ENCODE measurements at regions of chr1 and their contacts with region 1.

Region 1: DNA sequence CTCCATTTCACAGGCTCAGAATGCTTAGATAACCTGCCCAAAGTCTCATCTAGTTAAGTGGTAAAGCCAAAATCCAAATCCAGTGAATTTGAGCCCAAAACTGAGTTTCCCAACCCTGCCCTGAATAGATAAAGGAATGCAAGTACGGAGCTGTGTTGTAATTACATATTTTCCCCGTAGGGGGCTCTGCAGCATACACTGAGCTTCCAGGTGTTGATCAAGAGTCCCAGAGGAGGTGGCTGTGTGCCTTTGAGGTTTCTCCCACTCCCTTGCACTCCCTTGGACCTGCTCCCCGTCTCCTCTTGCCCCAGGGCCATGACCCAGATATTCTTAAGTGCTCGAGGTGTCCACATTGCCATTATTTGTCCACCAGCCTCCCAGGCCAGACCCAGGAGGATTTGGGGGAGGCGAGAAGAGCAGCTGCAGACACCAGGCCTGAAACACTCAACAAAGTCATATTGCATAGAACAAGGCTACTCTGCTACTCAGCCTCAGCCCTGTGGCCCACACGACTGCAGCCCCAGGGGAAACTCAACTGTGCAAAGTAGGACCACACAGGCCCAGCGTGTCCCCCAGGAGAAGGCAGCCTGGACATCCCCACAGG is 18.4 kb upstream of the LY9 start:
- DNase-seq: peak in 8 of 10 donors; percentile 26 to 75 (median 61)
- ATAC-seq: peak; percentile 77 to 80
- H3K4me3 Mint-ChIP-seq: no peak overlapping the region
- H3K27ac Mint-ChIP-seq: peak overlapping the region in 4 of 10 donors; percentile 13 to 62 (median 31)
- H3K4me1 Mint-ChIP-seq: peaks cover 10 to 43% (median 15%) of the 10 kb centered on the region in 4 donors
- H3K27me3 Mint-ChIP-seq: no peaks in the 10 kb centered on the region

Region 2: GRCh38 chr1:160830321-160831153 is 52.9 kb after region 1 on chr1:
- POLR2A ChIA-PET with region 1: interaction called, 10 read pairs
- DNase-seq: peak; percentile 47 to 89 (median 68)
- ATAC-seq: peak; percentile 80 to 86
- H3K4me3 Mint-ChIP-seq: no peak overlapping the region
- H3K27ac Mint-ChIP-seq: peak overlapping the region; percentile 68 to 95 (median 88)
- H3K4me1 Mint-ChIP-seq: peaks cover 29 to 57% (median 47%) of the 10 kb centered on the region in 4 donors
- H3K27me3 Mint-ChIP-seq: no peaks in the 10 kb centered on the region

Measured in naive thymus-derived CD8-positive, alpha-beta T cell (primary cell).